ENCODE measurements at regions of chr22 and their contacts with region 1.

Region 1: DNA sequence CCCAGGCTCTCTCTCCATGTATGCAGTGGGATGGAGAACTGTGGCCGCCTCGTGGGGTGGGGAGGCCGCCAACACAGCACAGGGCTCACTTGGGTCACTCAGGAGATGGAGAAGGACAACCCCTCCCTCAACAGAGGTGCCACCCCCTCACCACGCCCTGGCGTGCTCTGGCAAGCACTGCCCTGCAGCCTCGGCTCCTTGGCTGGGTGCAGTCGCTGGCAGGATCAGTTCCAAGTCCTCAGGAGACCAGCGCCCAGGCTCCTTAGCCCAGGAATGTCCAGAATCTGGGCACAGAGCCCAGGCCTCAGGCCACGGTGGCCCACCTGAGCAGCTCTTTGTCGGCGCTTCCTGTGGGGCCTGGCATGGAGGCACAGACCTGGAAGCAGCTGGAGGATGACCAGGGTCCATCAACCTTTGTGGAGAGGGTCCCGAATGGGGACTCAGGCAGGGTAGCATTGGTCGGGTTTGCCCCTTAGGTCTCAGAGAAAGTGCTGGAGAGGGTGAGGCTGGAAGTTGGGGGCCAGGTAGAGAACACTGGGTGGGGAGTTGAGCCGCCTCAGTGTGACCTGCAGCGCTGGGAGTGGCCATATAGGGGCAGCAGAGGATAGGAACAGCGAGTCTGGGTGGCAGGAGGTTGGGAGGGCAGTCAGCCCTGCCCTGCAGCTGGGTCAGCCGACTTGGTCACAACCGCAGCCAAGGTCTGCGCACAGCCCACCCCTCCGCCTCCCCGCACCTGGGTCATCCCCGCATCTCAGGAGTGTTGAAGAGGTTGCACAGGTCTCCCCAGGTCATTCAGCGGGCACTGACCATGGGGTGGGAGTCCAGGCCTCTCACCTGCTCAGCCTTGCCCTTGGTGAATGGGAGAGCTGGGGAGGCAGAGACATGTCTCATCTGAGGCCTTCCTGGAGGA is 8.2 kb downstream of the SUSD2 start:
- DNase-seq: no peak
- ATAC-seq: peak; percentile 95
- H3K4me3 ChIP-seq: no peak overlapping the region
- H3K27ac ChIP-seq: no peak overlapping the region
- H3K4me1 ChIP-seq: no peaks in the 10 kb centered on the region
- H3K27me3 ChIP-seq: no peaks in the 10 kb centered on the region
- CTCF ChIP-seq: peak; percentile 81 to 89 (median 87)
- EP300 ChIP-seq: no peak
- POLR2A ChIP-seq: no peak
- RAD21 ChIP-seq: peak; percentile 86

Region 2: DNA sequence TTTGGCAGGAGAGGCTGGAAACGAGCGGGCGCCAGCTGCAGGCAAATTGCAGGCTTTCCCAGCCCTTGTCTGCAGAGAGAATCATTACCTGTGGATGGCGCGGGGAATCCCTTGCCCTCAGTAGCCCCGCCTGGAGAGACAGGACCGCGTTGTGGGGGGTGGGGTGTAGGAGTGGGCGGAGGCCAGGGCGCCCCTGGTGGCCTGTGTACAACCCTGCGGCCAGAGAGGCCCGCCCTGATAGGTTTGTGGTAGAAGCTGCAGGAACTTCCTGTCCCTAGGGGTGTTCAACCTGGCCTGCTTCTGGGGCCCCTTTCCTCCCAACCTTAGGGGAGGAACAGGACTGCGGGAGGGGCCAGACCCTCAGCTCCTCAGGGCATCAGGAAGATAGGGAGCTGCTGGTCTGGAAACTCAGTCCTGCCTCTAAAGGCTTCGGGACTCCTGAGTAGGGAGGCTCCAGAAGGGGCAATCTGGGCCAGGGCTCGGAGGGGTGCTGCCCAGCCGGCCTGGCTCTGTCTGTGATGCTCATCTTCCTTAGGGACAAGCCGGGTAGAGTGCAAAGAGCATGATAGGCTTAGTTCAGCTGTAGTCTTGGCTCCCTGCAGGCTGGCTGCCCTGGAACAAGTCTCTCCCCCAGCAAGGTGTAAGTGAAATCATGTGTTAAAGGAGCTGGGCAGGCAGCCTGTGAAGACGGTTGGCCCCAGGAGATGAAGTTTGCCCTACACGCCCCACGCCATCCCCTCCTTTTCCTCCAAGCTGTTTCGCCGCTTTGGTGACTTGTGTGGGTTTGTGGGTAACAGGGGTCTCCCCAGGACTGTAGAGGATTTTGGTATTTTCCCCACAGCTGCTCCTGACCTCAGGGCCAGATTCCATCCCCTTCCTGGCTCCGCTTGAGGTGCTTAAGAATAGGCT is 32.3 kb before region 1 on chr22:
- CTCF ChIA-PET with region 1: no interaction called
- POLR2A ChIA-PET with region 1: no interaction called
- RAD21 ChIA-PET with region 1: no interaction called
- SMC1A ChIA-PET with region 1: no interaction called
- in situ Hi-C with region 1: no loop called
- intact Hi-C with region 1: no loop called
- DNase-seq: peak; percentile 78
- ATAC-seq: peak; percentile 92
- H3K4me3 ChIP-seq: peak overlapping the region; percentile 62
- H3K27ac ChIP-seq: peak overlapping the region; percentile 98
- H3K4me1 ChIP-seq: peaks cover 34% of the 10 kb centered on the region
- H3K27me3 ChIP-seq: no peaks in the 10 kb centered on the region
- CTCF ChIP-seq: peak; percentile 88 to 98 (median 95)
- EP300 ChIP-seq: peak in 1 of 2 experiments; percentile 57; a peak in 2 of 4 replicates
- POLR2A ChIP-seq: peak; percentile 79
- RAD21 ChIP-seq: peak; percentile 18; the same call in 1 of the 2 replicates

Region 3: GRCh38 chr22:24244101-24244787 is 54.7 kb after region 1 on chr22:
- CTCF ChIA-PET with region 1: interaction called, 14 read pairs
- POLR2A ChIA-PET with region 1: no interaction called
- RAD21 ChIA-PET with region 1: interaction called, 4 read pairs
- SMC1A ChIA-PET with region 1: interaction called, 5 read pairs
- in situ Hi-C with region 1: no loop called
- intact Hi-C with region 1: loop called (anchors 5 kb)
- DNase-seq: no peak
- ATAC-seq: no peak
- H3K4me3 ChIP-seq: no peak overlapping the region
- H3K27ac ChIP-seq: no peak overlapping the region
- H3K4me1 ChIP-seq: peaks cover 15% of the 10 kb centered on the region
- H3K27me3 ChIP-seq: no peaks in the 10 kb centered on the region
- CTCF ChIP-seq: no peak
- EP300 ChIP-seq: no peak
- POLR2A ChIP-seq: no peak
- RAD21 ChIP-seq: no peak

Region 4: GRCh38 chr22:24265734-24266133 is 76.2 kb after region 1 on chr22:
- CTCF ChIA-PET with region 1: no interaction called
- POLR2A ChIA-PET with region 1: no interaction called
- RAD21 ChIA-PET with region 1: no interaction called
- SMC1A ChIA-PET with region 1: no interaction called
- in situ Hi-C with region 1: no loop called
- intact Hi-C with region 1: no loop called
- DNase-seq: no peak
- ATAC-seq: no peak
- H3K4me3 ChIP-seq: no peak overlapping the region
- H3K27ac ChIP-seq: no peak overlapping the region
- H3K4me1 ChIP-seq: peaks cover 4% of the 10 kb centered on the region; the same call in 1 of the 2 replicates
- H3K27me3 ChIP-seq: no peaks in the 10 kb centered on the region
- CTCF ChIP-seq: no peak
- EP300 ChIP-seq: no peak
- POLR2A ChIP-seq: no peak
- RAD21 ChIP-seq: no peak